ENCODE measurements at regions of chr13 and their contacts with region 1.

Region 1: DNA sequence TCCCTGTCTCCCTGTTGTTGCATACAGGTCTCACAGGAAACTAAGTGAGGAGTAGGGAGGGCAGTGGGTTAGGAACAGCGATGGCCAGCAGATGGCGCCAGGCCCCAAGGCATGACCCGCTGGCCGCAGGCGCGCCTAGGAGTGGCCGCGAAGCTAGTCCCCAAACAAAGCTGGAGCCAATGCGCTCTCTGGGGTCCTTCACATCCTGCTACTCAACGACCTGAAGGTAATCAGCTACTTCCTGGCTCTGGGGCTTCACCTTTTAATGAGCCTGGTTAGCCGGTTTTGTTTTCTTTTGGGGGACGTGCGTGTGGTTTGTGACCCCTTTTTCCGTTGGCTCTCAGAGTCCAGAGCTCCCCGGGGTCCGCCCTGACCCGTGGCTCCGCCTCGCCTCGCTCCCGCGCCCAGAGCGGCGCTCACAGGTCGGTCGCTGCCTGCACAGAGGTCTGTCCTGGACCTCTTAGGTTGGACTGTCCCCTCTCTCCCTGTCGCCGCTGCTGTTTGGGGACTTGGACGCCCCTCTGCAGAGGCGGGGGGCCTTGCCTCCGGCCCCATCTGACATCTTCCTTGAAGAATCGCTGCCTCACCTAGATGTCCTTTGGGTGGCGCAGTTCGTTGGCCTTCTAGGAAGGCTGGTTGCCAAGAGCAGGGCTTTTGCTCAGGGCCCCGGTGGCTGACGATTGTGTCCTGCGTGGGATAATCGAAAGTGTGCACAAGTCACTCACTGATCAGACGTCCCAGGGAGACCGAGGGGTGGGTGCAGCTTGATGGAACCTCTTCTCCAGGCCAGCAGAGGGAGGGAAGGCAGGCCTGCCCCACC is 62.1 kb upstream of the GTF3A start:
- DNase-seq: peak; percentile 56 to 86 (median 78)
- ATAC-seq: peak; percentile 90
- H3K4me3 ChIP-seq: peak overlapping the region; percentile 17 to 39
- H3K4me3 Mint-ChIP-seq: peak overlapping the region; percentile 67
- H3K27ac ChIP-seq: no peak overlapping the region
- H3K27ac Mint-ChIP-seq: no peak overlapping the region
- H3K4me1 ChIP-seq: peaks cover 5% of the 10 kb centered on the region
- H3K4me1 Mint-ChIP-seq: peaks cover 5% of the 10 kb centered on the region
- H3K27me3 ChIP-seq: peaks cover 0 to 10% of the 10 kb centered on the region in 2 experiments
- H3K27me3 Mint-ChIP-seq: peaks cover 17% of the 10 kb centered on the region
- CTCF ChIP-seq: peak; percentile 73

Region 2: DNA sequence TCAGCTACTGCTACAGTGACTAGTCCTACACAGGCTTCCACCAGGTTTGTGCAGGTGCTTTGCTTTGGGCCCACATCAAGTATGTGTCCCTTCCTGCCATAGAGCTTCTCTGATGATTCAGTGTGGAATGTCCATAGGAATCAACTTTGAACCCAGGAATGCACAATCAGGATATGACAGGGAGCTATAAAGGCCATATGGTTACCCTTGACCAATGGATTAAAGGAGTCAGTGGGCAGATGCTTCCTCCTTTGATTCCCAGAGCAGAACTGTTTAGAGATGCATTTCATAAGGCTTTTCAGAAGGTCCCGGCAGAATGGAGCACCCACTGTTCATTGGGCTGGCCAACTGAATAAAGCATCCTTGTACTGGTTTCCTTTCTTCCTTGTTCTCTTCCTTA is 950.0 kb before region 1 on chr13:
- CTCF ChIA-PET with region 1: no interaction called
- POLR2A ChIA-PET with region 1: no interaction called
- intact Hi-C with region 1: no loop called
- DNase-seq: no peak
- ATAC-seq: no peak
- H3K4me3 ChIP-seq: no peak overlapping the region
- H3K4me3 Mint-ChIP-seq: no peak overlapping the region
- H3K27ac ChIP-seq: no peak overlapping the region
- H3K27ac Mint-ChIP-seq: no peak overlapping the region
- H3K4me1 ChIP-seq: no peaks in the 10 kb centered on the region
- H3K4me1 Mint-ChIP-seq: no peaks in the 10 kb centered on the region
- H3K27me3 ChIP-seq: no peaks in the 10 kb centered on the region
- H3K27me3 Mint-ChIP-seq: no peaks in the 10 kb centered on the region
- CTCF ChIP-seq: no peak

Region 3: GRCh38 chr13:26977556-26977955 is 384.7 kb before region 1 on chr13:
- CTCF ChIA-PET with region 1: interaction called, 251 read pairs
- POLR2A ChIA-PET with region 1: no interaction called
- intact Hi-C with region 1: no loop called
- DNase-seq: peak in 1 of 9 experiments; percentile 15
- ATAC-seq: no peak
- H3K4me3 ChIP-seq: no peak overlapping the region
- H3K4me3 Mint-ChIP-seq: no peak overlapping the region
- H3K27ac ChIP-seq: no peak overlapping the region
- H3K27ac Mint-ChIP-seq: no peak overlapping the region
- H3K4me1 ChIP-seq: no peaks in the 10 kb centered on the region
- H3K4me1 Mint-ChIP-seq: peaks cover 1% of the 10 kb centered on the region
- H3K27me3 ChIP-seq: no peaks in the 10 kb centered on the region
- H3K27me3 Mint-ChIP-seq: peaks cover 8% of the 10 kb centered on the region
- CTCF ChIP-seq: no peak

Region 4: DNA sequence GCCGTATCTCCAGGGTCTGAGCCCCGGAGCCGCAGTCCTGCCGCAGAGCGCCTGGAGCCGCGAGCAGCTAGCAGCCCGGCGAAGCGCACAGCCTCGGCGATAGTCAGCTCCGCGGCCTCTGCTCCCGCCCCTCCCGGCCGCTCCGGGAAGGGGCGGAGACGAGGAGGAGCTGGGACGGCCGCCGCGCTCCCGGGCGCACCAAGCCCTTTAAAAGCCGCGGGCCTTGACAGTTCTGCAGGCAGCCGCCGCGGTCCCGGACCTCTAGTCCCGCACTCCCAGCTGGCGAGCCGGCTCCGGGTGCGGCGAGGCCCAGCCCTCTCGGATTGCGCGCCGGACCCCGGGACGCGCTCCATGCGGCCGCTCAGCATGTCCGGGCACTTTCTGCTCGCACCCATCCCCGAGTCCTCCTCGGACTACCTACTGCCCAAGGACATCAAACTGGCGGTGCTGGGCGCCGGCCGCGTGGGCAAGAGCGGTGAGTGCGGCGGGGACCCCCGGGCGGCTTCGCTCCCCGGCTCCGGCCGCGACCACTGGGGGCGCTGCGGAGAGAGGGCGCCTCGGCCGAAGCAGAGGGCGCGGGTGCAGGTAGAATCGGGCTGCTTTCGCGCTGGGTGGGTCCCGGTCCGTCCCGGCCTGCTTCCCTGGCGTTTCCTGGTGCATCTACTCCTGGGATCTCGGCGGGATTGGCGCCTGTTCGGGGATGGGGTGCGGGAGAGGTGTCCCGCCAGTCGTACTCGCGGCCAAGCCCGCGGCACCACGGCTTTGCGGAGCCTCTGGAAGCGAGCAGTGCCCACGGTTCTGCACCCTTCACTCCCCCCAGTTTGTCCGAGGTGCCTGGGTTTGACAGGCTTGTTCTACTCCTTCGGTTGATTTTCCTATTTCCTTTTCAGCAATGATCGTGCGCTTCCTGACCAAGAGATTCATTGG is 91.4 kb before region 1 on chr13 and contains the start of gene RASL11A:
- CTCF ChIA-PET with region 1: interaction called, 8 read pairs
- POLR2A ChIA-PET with region 1: no interaction called
- intact Hi-C with region 1: loop called (anchors 5 kb)
- DNase-seq: peak; percentile 49 to 85 (median 74)
- ATAC-seq: peak; percentile 93
- H3K4me3 ChIP-seq: peak within 1 kb of the TSS; percentile 58 to 88
- H3K4me3 Mint-ChIP-seq: peak within 1 kb of the TSS; percentile 92
- H3K27ac ChIP-seq: peak within 1 kb of the TSS in 1 of 2 experiments; percentile 46
- H3K27ac Mint-ChIP-seq: peak within 1 kb of the TSS; percentile 86
- H3K4me1 ChIP-seq: peaks cover 9% of the 10 kb centered on the region
- H3K4me1 Mint-ChIP-seq: peaks cover 25% of the 10 kb centered on the region
- H3K27me3 ChIP-seq: no peaks in the 10 kb centered on the region
- H3K27me3 Mint-ChIP-seq: peaks cover 2% of the 10 kb centered on the region
- CTCF ChIP-seq: peak; percentile 98
- total RNA-seq, gene RASL11A: 9.0 to 12.9 TPM

Region 5: DNA sequence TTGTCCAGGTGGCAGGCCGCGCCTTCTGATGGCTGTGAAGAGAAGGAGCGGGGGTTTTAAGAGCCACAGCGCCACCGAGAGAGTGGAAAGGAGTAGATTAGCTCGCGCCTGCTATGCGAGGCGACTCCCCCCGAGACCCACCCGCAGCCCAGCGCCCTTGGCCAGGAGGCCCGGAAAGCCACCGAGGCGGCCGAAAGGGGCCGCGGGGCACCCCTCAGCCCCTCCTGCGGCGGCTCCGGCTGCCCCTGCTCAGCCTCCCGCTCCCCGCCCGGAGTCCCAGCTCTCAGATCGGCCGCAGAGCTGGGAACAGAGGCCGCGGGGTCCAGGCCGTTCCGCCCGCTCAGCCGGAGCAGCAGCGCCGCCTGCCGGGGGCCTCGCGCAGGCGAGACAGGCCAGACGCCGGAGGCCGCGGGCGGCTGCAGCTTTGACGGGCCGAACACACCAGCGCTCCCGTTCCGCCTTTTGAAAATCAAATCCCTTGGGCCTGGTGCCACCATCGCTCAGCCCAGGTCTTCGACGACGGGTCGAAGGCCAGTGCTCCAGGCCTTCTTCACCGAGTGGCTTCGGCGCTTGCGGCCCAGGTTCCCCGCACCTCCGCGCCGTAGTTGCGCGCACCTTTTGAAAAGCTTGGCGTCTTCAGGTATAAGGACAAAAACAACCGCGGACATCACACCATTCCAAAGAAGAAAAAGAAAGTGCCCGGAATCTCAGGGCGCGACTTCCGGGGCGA is 591.6 kb after region 1 on chr13:
- CTCF ChIA-PET with region 1: interaction called, 8 read pairs
- POLR2A ChIA-PET with region 1: no interaction called
- intact Hi-C with region 1: loop called in 1 of 2 experiments (anchors 1 kb)
- DNase-seq: peak; percentile 23 to 73 (median 54)
- ATAC-seq: peak; percentile 81
- H3K4me3 ChIP-seq: peak overlapping the region; percentile 28 to 53
- H3K4me3 Mint-ChIP-seq: peak overlapping the region; percentile 71
- H3K27ac ChIP-seq: no peak overlapping the region
- H3K27ac Mint-ChIP-seq: no peak overlapping the region
- H3K4me1 ChIP-seq: peaks cover 7% of the 10 kb centered on the region
- H3K4me1 Mint-ChIP-seq: peaks cover 17% of the 10 kb centered on the region
- H3K27me3 ChIP-seq: peaks cover 18 to 22% of the 10 kb centered on the region in 2 experiments
- H3K27me3 Mint-ChIP-seq: peaks cover 68% of the 10 kb centered on the region
- CTCF ChIP-seq: peak; percentile 70

Region 6: DNA sequence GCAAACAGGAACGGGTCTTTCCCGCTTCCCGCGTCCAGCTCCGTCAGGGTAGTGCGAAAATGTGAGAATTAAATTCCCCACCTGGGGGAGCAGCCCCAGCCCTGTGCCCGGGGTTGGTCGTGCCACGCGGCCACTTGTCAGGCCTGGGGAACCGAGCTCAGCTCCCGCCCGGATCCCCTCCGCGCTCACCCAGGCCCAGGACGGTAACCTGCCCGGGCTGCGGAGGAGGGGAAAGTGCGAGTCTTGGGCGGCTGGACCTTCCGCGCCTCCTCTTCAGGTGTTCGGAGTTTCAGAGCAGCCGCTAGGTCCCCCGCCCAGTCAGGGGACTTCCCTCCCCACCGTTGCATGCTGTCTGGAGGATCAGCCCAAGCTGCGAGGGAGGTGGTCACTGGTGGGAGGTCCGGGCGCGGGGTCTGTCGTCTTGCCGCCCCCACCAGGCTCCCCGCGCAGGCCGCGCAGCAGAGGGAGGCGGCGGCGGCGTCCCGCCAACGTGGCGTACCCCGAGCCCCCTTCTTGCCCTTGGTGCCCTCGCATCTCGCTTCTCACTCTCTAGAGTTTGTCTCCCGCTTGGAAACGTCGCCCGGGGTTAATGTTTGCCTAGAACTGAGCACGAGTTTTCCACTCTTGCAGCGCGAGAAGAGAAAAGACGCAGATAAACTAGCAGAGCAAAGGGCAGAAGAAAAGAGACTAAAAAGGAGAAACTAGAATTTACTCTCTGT is 618.2 kb after region 1 on chr13:
- CTCF ChIA-PET with region 1: interaction called, 92 read pairs
- POLR2A ChIA-PET with region 1: no interaction called
- intact Hi-C with region 1: loop called (anchors 1 kb)
- DNase-seq: no peak
- ATAC-seq: no peak
- H3K4me3 ChIP-seq: no peak overlapping the region
- H3K4me3 Mint-ChIP-seq: no peak overlapping the region
- H3K27ac ChIP-seq: no peak overlapping the region
- H3K27ac Mint-ChIP-seq: no peak overlapping the region
- H3K4me1 ChIP-seq: no peaks in the 10 kb centered on the region
- H3K4me1 Mint-ChIP-seq: peaks cover 29% of the 10 kb centered on the region
- H3K27me3 ChIP-seq: peaks cover 6 to 24% of the 10 kb centered on the region in 2 experiments
- H3K27me3 Mint-ChIP-seq: peaks cover 64% of the 10 kb centered on the region
- CTCF ChIP-seq: no peak

Region 7: DNA sequence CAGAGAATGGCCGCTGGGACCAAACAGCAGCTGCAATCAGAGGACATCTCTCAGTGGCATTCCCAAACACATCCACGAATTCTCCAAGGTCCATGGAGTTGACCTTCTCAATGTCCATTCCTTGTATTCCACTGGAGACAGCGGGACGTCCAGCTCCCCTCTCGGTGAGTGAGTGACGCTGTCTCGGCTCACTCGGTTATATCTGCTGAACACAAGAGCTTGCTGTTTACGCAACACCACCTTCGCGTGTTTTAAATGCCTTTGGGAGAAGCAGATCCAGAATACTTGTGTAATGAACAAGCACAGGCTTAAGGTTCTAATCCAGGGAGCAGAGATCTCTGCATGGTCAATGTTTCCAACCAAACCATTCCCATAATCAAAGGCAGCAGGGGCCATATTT is 626.2 kb after region 1 on chr13 and contains the start of gene URAD:
- CTCF ChIA-PET with region 1: interaction called, 92 read pairs
- POLR2A ChIA-PET with region 1: no interaction called
- intact Hi-C with region 1: loop called (anchors 1 kb)
- DNase-seq: no peak
- ATAC-seq: no peak
- H3K4me3 ChIP-seq: no peak within 1 kb of the TSS
- H3K4me3 Mint-ChIP-seq: no peak within 1 kb of the TSS
- H3K27ac ChIP-seq: no peak within 1 kb of the TSS
- H3K27ac Mint-ChIP-seq: no peak within 1 kb of the TSS
- H3K4me1 ChIP-seq: no peaks in the 10 kb centered on the region
- H3K4me1 Mint-ChIP-seq: no peaks in the 10 kb centered on the region
- H3K27me3 ChIP-seq: no peaks in the 10 kb centered on the region
- H3K27me3 Mint-ChIP-seq: peaks cover 22% of the 10 kb centered on the region
- CTCF ChIP-seq: no peak
- total RNA-seq, gene URAD: not detected

Region 8: GRCh38 chr13:29362849-29363604 is 2000.8 kb after region 1 on chr13:
- CTCF ChIA-PET with region 1: no interaction called
- POLR2A ChIA-PET with region 1: no interaction called
- intact Hi-C with region 1: loop called in 1 of 2 experiments (anchors 5 kb)
- DNase-seq: peak in 6 of 9 experiments; percentile 9 to 56 (median 28)
- ATAC-seq: peak; percentile 48
- H3K4me3 ChIP-seq: no peak overlapping the region
- H3K4me3 Mint-ChIP-seq: no peak overlapping the region
- H3K27ac ChIP-seq: no peak overlapping the region
- H3K27ac Mint-ChIP-seq: no peak overlapping the region
- H3K4me1 ChIP-seq: no peaks in the 10 kb centered on the region
- H3K4me1 Mint-ChIP-seq: peaks cover 4% of the 10 kb centered on the region
- H3K27me3 ChIP-seq: no peaks in the 10 kb centered on the region
- H3K27me3 Mint-ChIP-seq: peaks cover 20% of the 10 kb centered on the region
- CTCF ChIP-seq: peak; percentile 69